ENCODE measurements at regions of chr17 and their contacts with region 1.

Region 1: GRCh38 chr17:8118769-8119580 is 661 bp upstream of the ALOXE3 start:
- DNase-seq: peak; percentile 84
- H3K4me3 Mint-ChIP-seq: peak overlapping the region; percentile 77
- H3K27ac Mint-ChIP-seq: peak overlapping the region; percentile 98
- H3K4me1 Mint-ChIP-seq: peaks cover 32% of the 10 kb centered on the region
- H3K27me3 Mint-ChIP-seq: no peaks in the 10 kb centered on the region
- CTCF ChIP-seq: peak; percentile 87

Region 2: GRCh38 chr17:8079291-8080207 is 39.4 kb before region 1 on chr17:
- CTCF ChIA-PET with region 1: interaction called, 67 read pairs
- POLR2A ChIA-PET with region 1: interaction called, 21 read pairs
- intact Hi-C with region 1: loop called (anchors 1 kb)
- DNase-seq: peak; percentile 60
- H3K4me3 Mint-ChIP-seq: peak overlapping the region; percentile 61
- H3K27ac Mint-ChIP-seq: no peak overlapping the region
- H3K4me1 Mint-ChIP-seq: peaks cover 6% of the 10 kb centered on the region
- H3K27me3 Mint-ChIP-seq: peaks cover 11% of the 10 kb centered on the region
- CTCF ChIP-seq: peak; percentile 87

Region 3: DNA sequence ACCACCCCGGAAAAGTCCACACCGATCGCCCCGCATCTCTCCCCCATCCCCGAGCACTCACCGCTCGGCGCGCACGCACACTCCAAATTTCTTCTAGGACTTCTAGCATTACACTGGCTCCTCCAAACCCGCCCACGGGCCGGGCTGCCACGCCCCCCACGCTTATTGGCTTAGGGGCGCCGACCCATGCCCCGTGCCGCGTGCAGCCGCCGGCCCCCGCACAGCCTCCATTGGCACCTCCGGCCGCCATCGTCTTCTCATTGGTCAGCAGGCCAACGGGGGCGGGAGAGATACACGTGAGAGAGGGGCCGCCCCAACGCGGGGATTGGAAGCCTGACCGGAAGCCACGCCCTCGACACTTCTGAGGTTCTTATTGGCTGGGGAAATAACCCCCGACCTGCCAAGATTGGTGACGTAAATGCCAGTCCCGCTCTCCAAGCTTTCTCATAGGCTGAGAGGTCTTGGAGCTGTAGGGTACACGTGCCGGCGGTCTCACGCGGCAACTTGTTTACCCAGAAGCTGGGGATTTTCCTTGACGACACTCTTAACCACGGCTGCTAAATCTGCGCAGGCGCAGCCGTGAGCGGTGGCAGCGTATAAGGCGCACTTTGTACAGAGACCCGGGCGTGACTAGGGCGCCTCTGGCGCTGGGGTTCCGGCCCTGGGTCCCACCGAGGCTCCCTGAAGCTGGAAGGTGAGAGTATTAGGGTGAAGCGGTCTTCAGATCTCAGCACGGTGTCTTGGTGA is 37.4 kb after region 1 on chr17:
- CTCF ChIA-PET with region 1: interaction called, 16 read pairs
- POLR2A ChIA-PET with region 1: interaction called, 172 read pairs
- intact Hi-C with region 1: loop called (anchors 1 kb)
- DNase-seq: peak; percentile 100
- H3K4me3 Mint-ChIP-seq: no peak overlapping the region
- H3K27ac Mint-ChIP-seq: no peak overlapping the region
- H3K4me1 Mint-ChIP-seq: peaks cover 38% of the 10 kb centered on the region
- H3K27me3 Mint-ChIP-seq: no peaks in the 10 kb centered on the region
- CTCF ChIP-seq: no peak

Region 4: DNA sequence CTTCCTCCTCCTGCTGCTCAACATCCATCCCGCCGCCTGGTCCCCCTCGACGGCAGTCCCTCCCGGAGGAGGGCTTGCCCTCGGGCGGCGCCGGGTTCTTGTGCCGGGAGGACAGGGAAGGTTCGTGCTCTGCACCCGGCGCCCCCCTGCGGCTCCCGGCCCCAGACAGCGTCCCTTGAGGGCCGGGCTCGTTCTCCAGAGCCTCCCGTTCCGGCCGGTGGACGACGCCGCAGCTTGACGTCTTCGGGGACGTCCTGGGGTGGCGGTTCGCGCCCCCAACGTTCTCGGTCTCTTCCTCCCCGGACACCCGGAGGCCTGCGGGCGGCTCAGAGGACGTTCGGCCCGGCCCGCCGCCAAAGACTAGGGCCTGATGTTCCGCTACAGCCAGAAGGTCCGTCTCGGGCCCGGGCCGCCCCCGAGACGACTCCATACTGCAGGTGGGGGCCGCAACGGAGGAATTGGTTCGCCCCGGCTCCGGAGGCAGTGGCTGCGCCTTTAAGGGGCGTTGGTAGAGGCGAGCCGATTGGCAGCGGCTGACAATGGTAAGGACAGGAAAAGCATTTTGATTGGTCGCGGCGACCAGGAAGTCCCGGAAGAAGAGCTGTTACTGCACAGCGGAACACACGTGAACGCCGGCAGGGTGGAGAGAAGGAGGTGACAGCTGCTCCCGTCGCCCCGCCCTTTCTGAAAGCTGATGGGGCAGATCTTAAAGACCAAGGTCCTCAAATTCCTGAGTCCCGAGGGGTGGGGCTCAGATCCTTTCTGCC is 70.9 kb after region 1 on chr17 and contains the start of gene BORCS6:
- CTCF ChIA-PET with region 1: interaction called, 7 read pairs
- POLR2A ChIA-PET with region 1: interaction called, 93 read pairs
- intact Hi-C with region 1: loop called (anchors 1 kb)
- DNase-seq: peak; percentile 99
- H3K4me3 Mint-ChIP-seq: no peak within 1 kb of the TSS
- H3K27ac Mint-ChIP-seq: peak within 1 kb of the TSS; percentile 59
- H3K4me1 Mint-ChIP-seq: no peaks in the 10 kb centered on the region
- H3K27me3 Mint-ChIP-seq: no peaks in the 10 kb centered on the region
- CTCF ChIP-seq: no peak
- total RNA-seq, gene BORCS6: 3.9 and 4.4 TPM in 2 replicates

Region 5: DNA sequence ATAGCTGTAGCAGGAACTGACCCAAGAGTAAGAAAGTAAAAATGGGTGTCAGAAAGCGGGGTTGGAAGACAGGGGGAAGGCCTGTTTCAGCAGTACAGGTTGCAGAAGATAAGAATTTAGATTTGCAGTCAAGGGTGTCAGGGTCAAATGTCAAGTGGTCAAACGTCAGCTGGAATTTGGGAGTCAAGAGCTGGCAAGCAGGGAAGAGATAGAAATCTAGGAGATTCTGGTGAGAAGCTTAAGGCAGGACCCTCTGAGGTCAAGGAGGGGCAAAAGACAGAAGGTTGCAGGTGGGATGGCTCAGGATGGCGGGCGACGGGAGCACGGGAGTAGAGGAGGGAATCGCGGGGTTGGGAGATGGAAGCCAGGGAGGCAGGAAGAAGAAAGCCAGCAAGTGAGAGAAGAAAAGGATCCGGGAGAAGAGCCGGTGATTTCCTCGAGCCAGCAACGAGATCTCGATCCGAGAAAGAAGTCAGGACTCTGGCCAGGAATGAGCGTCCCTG is 175.9 kb after region 1 on chr17:
- CTCF ChIA-PET with region 1: interaction called, 5 read pairs
- POLR2A ChIA-PET with region 1: interaction called, 12 read pairs
- intact Hi-C with region 1: loop called (anchors 1 kb)
- DNase-seq: no peak
- H3K4me3 Mint-ChIP-seq: peak overlapping the region; percentile 92
- H3K27ac Mint-ChIP-seq: peak overlapping the region; percentile 91
- H3K4me1 Mint-ChIP-seq: peaks cover 21% of the 10 kb centered on the region
- H3K27me3 Mint-ChIP-seq: no peaks in the 10 kb centered on the region
- CTCF ChIP-seq: no peak